Activated CD4-positive, alpha-beta T cell treated with anti-CD3 and anti-CD28 coated beads, Interleukin-2, amount 10 ng/mL, durations not matched to agents 24 days and 14 days (primary cell): ENCODE measurements at regions of chr4 and their contacts with region 1.

Region 1: DNA sequence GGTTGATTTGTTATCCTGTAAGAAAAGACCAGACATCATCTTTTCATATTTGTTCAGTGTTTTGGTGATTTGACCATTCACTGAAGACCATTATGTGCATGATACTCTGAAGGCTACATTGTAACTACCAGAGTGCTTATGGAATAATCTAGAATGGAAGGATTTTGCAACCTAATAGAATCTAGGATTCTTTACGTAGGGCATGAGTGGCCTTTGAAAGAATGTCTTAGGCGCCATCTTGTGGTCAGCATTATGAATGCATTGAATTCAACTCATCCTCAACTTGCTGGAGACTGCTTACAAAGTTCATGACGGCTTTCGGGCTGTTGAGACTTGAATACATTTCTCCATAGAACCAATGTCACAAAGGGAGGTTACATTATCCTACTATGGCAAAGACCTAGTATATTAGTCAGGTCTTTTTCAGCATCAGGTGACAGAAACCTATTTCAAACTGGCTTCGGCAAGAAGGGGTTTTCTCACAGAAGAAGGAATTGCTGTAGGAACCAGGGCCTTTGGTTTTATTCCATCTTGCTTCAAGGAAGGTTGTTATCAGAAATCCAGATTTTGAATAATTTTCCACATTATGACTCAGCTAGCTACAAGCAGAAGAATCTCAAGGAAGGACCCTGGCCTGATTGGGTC is 104.1 kb downstream of the GPAT3 start:
- DNase-seq: peak; percentile 89
- H3K4me3 Mint-ChIP-seq: no peak overlapping the region
- H3K27ac Mint-ChIP-seq: no peak overlapping the region
- H3K4me1 Mint-ChIP-seq: peaks cover 5% of the 10 kb centered on the region
- H3K27me3 Mint-ChIP-seq: peaks cover 11% of the 10 kb centered on the region

Region 2: GRCh38 chr4:83362492-83363329 is 277.3 kb before region 1 on chr4:
- intact Hi-C with region 1: loop called (anchors 2 kb)
- DNase-seq: no peak
- H3K4me3 Mint-ChIP-seq: no peak overlapping the region
- H3K27ac Mint-ChIP-seq: no peak overlapping the region
- H3K4me1 Mint-ChIP-seq: peaks cover 7% of the 10 kb centered on the region
- H3K27me3 Mint-ChIP-seq: peaks cover 6% of the 10 kb centered on the region

Region 3: GRCh38 chr4:83387753-83388676 is 252.0 kb before region 1 on chr4:
- intact Hi-C with region 1: no loop called
- DNase-seq: peak; percentile 81
- H3K4me3 Mint-ChIP-seq: no peak overlapping the region
- H3K27ac Mint-ChIP-seq: peak overlapping the region; percentile 58
- H3K4me1 Mint-ChIP-seq: peaks cover 9% of the 10 kb centered on the region
- H3K27me3 Mint-ChIP-seq: peaks cover 4% of the 10 kb centered on the region

Region 4: DNA sequence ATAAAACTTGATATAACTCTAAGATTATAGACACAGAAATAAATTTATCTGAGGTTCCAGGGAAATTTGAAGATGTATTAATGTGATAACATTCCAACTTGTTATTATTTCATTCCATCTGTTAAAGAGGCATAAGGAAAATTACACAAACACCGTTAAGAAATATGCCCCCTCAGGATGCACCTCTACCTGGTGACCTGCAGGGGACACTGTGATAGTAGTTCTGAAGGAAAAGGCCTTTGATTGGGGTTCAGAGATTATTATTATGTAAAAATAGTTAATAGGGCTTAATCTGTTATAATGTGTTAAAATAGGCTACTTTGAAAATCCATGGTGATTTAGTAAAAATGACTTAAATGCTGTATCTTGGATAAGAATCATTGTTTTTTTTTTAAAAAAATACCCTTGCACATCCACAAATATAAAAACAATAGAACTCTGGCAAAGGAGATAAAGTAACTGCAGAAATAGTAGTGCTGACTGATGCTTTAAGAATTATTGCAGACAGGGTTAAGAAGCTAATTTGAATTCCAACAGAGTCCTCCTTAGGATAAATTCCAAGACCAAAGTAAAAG is 149.0 kb before region 1 on chr4:
- intact Hi-C with region 1: loop called (anchors 1 kb)
- DNase-seq: peak; percentile 71
- H3K4me3 Mint-ChIP-seq: no peak overlapping the region
- H3K27ac Mint-ChIP-seq: no peak overlapping the region
- H3K4me1 Mint-ChIP-seq: peaks cover 3% of the 10 kb centered on the region
- H3K27me3 Mint-ChIP-seq: peaks cover 3% of the 10 kb centered on the region

Region 5: DNA sequence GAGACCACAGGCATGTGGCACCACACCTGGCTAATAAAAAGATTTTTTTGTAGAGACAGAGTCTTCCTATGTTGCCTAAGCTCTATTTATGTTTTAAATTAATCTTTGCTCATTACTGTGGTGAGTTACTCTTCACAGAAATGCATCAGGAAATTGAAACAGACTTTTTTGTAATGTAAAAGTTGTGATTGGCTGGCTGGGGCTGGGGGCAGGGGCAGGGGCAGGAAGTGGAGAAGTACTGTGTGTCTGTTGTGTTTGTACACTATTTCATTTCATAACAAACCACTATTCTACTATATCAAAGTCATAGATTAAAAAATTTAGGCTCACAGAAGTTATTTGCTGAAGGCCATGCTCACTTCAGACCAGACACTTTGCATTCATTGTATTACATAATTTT is 136.0 kb before region 1 on chr4:
- intact Hi-C with region 1: loop called (anchors 1 kb)
- DNase-seq: no peak
- H3K4me3 Mint-ChIP-seq: no peak overlapping the region
- H3K27ac Mint-ChIP-seq: no peak overlapping the region
- H3K4me1 Mint-ChIP-seq: peaks cover 5% of the 10 kb centered on the region
- H3K27me3 Mint-ChIP-seq: no peaks in the 10 kb centered on the region

Region 6: GRCh38 chr4:83738895-83739294 is 98.9 kb after region 1 on chr4:
- intact Hi-C with region 1: no loop called
- DNase-seq: no peak
- H3K4me3 Mint-ChIP-seq: no peak overlapping the region
- H3K27ac Mint-ChIP-seq: no peak overlapping the region
- H3K4me1 Mint-ChIP-seq: no peaks in the 10 kb centered on the region
- H3K27me3 Mint-ChIP-seq: peaks cover 12% of the 10 kb centered on the region

Region 7: DNA sequence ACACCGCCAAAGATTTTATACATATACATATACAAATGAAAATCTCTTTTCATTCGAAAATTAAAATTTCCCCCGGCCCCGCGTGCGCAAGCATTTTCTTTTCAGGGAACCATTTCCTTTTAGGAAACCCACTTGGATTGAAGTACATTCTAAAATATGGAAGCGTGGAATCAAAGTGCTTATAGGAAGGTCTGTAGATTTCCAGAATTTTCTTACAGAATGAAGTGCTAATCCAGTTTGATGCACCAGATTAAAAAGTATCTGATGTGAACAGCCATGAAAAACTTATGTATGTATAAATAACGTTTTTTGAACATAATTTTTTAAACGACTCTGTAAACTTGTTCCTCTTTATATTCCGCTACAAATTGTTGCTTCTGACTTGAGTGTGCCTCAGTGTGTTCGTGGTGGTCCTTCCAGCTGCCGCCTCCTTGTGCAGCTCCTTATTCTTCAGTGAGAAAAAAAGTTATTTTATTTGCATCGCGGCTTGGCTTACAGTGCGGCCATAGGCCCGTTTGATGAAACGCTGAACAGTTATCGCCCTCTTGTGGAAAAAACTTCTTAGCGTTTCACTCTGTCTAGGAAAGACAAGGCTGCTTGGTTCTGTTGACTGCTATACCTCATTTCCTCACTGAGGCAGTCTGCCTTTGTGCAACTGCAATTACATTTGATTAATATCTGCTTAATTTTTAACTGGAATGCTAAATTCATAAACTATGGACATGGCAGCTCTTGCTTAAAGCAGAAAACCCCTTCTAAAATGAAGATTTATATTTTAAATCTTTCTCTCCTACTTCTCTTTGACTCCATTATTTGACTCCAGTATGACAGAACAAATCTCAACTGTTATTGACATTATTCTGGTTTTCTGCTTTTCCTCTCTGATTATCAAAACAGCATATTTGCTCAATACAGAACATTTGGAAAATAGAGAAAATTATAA is 863.8 kb after region 1 on chr4:
- intact Hi-C with region 1: loop called (anchors 2 kb)
- DNase-seq: peak; percentile 75
- H3K4me3 Mint-ChIP-seq: no peak overlapping the region
- H3K27ac Mint-ChIP-seq: no peak overlapping the region
- H3K4me1 Mint-ChIP-seq: peaks cover 5% of the 10 kb centered on the region
- H3K27me3 Mint-ChIP-seq: peaks cover 70% of the 10 kb centered on the region